ENCODE measurements at regions of chr17 and their contacts with region 1.

Region 1: DNA sequence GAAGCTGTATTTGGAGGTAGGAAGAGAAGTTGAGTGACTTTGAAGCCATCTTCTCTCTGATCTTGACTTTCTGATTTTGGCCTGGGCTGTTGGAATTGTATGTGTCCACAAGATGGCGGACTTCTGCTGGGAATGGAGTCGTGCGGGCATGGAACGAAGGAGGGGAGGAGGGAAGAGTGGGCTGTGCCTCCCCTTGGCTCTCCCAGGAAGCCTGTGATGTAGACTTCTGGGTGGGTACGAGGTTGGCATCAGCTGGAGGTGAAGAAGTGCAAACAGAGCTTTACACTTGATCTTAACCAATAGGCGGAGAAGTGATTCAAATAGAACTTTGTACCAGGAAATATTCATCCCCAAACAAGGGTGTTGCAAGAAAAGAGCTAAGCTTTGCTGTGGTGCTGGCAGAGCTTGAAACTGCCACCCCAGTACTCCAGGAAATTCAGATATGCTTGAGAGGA is 7.4 kb upstream of the TMEM220 start:
- DNase-seq: peak; percentile 65
- H3K4me3 Mint-ChIP-seq: no peak overlapping the region
- H3K27ac Mint-ChIP-seq: no peak overlapping the region
- H3K4me1 Mint-ChIP-seq: peaks cover 5% of the 10 kb centered on the region
- H3K27me3 Mint-ChIP-seq: peaks cover 72% of the 10 kb centered on the region
- CTCF ChIP-seq: peak; percentile 81

Region 2: DNA sequence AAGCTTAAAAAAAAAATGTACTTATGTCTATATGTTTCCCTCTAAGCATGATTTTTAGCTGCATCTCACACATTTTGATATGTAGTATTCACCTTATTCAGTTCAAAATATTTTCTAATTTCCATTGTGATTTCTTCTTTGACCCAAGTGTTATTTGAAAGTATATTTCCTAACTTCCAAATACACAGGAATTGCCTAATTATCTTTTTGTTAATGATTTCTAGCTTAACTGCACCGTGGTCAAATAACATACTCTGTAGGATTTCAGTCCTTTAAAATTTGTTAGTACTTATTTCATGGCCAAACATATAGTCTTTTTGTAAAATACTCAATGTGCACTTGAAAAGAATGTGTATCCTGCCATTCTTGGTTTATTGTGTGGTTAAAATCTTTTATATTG is 18.6 kb before region 1 on chr17:
- CTCF ChIA-PET with region 1: interaction called, 29 read pairs
- POLR2A ChIA-PET with region 1: interaction called, 4 read pairs
- intact Hi-C with region 1: no loop called
- DNase-seq: no peak
- H3K4me3 Mint-ChIP-seq: no peak overlapping the region
- H3K27ac Mint-ChIP-seq: no peak overlapping the region
- H3K4me1 Mint-ChIP-seq: no peaks in the 10 kb centered on the region
- H3K27me3 Mint-ChIP-seq: no peaks in the 10 kb centered on the region
- CTCF ChIP-seq: no peak

Region 3: GRCh38 chr17:10772425-10773380 is 35.5 kb after region 1 on chr17:
- CTCF ChIA-PET with region 1: interaction called, 10 read pairs
- POLR2A ChIA-PET with region 1: no interaction called
- intact Hi-C with region 1: no loop called
- DNase-seq: peak; percentile 48
- H3K4me3 Mint-ChIP-seq: no peak overlapping the region
- H3K27ac Mint-ChIP-seq: no peak overlapping the region
- H3K4me1 Mint-ChIP-seq: no peaks in the 10 kb centered on the region
- H3K27me3 Mint-ChIP-seq: no peaks in the 10 kb centered on the region
- CTCF ChIP-seq: peak; percentile 85

Region 4: DNA sequence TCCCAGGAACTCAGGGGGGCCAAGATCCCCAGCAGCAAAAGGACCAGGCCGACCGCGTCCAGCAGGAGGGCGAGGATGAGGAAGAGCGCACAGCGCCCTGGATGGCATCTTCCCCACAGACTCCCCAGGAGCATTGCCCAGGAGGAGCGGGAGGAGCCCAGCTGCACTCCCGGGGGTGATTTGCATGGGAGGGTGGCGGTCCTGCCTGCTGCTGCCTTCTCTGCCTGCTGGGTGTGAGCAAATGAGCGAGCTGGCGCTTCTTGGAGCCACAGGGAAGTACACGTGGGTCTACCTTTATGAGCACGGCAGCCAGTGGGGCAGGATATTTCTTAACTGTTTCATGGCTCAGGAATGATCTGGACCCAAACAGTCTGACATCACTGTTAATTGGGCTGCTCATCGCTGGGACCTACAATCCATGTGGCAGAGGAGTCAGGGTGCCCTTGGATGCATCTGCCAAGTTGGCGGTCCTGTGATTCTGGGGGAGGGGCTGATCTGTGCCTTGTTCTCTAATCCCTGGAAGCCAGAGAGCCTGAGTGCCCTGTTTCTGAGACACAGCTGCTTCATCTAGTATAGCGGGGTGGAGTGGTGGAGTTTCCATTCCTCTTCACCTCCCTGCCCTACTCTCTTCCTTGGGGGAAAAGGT is 66.8 kb after region 1 on chr17 and contains the start of gene TMEM238L:
- CTCF ChIA-PET with region 1: no interaction called
- POLR2A ChIA-PET with region 1: no interaction called
- intact Hi-C with region 1: no loop called
- DNase-seq: no peak
- H3K4me3 Mint-ChIP-seq: no peak within 1 kb of the TSS
- H3K27ac Mint-ChIP-seq: peak within 1 kb of the TSS; percentile 21
- H3K4me1 Mint-ChIP-seq: no peaks in the 10 kb centered on the region
- H3K27me3 Mint-ChIP-seq: peaks cover 8% of the 10 kb centered on the region
- CTCF ChIP-seq: no peak
- total RNA-seq, gene TMEM238L: not detected in 2 replicates

Region 5: GRCh38 chr17:10836966-10837590 is 99.9 kb after region 1 on chr17:
- CTCF ChIA-PET with region 1: interaction called, 90 read pairs
- POLR2A ChIA-PET with region 1: no interaction called
- intact Hi-C with region 1: no loop called
- DNase-seq: no peak
- H3K4me3 Mint-ChIP-seq: no peak overlapping the region
- H3K27ac Mint-ChIP-seq: no peak overlapping the region
- H3K4me1 Mint-ChIP-seq: no peaks in the 10 kb centered on the region
- H3K27me3 Mint-ChIP-seq: no peaks in the 10 kb centered on the region
- CTCF ChIP-seq: no peak

Region 6: GRCh38 chr17:11144358-11145233 is 407.4 kb after region 1 on chr17:
- CTCF ChIA-PET with region 1: interaction called, 32 read pairs
- POLR2A ChIA-PET with region 1: no interaction called
- intact Hi-C with region 1: loop called (anchors 5 kb)
- DNase-seq: peak; percentile 46
- H3K4me3 Mint-ChIP-seq: no peak overlapping the region
- H3K27ac Mint-ChIP-seq: no peak overlapping the region
- H3K4me1 Mint-ChIP-seq: peaks cover 14% of the 10 kb centered on the region
- H3K27me3 Mint-ChIP-seq: no peaks in the 10 kb centered on the region
- CTCF ChIP-seq: peak; percentile 74

Region 7: DNA sequence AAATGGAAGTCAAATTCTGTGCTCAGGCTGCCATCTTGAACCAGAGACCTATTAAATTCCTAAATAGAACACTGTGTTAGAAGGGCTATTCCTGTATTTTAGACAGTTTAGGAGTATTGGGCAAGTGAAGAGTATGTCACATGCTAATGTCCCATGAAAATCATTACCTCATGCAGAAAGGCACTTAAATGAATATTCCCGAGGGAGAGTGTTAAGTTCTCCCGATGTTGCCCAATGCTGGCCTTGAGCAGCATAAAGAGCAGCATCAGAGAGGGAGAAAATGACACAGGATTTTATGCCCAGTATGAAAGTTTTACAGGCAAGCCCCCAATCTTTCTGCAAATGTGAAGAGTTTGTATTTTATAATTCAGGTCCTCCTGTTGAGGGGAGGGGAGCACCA is 475.6 kb after region 1 on chr17:
- CTCF ChIA-PET with region 1: no interaction called
- POLR2A ChIA-PET with region 1: no interaction called
- intact Hi-C with region 1: no loop called
- DNase-seq: no peak
- H3K4me3 Mint-ChIP-seq: no peak overlapping the region
- H3K27ac Mint-ChIP-seq: no peak overlapping the region
- H3K4me1 Mint-ChIP-seq: no peaks in the 10 kb centered on the region
- H3K27me3 Mint-ChIP-seq: no peaks in the 10 kb centered on the region
- CTCF ChIP-seq: no peak

Measured in MCF 10A (cell line).